A673 (cell line): ENCODE measurements at regions of chr1 and their contacts with region 1.

Region 1: DNA sequence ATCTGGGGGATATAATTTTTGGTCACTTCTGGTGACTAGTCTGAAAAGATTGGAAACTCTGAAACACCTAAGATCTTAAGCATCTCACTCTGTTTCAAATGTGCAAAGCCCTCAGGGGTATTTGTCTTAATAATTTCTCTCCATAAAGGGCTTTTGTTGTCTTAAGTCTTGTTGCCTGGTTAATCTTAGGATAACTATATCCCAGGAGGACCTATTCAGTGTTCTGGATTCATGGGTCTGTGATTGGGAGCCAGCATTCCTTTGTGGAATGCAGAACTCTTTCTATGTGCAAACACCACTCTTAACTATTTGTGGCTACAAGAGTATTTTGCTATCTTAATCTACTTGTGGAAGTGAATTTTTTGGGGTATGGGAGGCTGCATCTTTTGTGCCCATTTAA is 1573.0 kb upstream of the PRMT6 start:
- DNase-seq: no peak
- H3K4me3 ChIP-seq: no peak overlapping the region
- H3K27ac ChIP-seq: no peak overlapping the region
- H3K4me1 ChIP-seq: no peaks in the 10 kb centered on the region
- H3K27me3 ChIP-seq: no peaks in the 10 kb centered on the region
- CTCF ChIP-seq: no peak

Region 2: GRCh38 chr1:105516068-105516467 is 32.6 kb after region 1 on chr1:
- CTCF ChIA-PET with region 1: no interaction called
- POLR2A ChIA-PET with region 1: no interaction called
- intact Hi-C with region 1: loop called (anchors 5 kb)
- DNase-seq: no peak
- H3K4me3 ChIP-seq: no peak overlapping the region
- H3K27ac ChIP-seq: no peak overlapping the region
- H3K4me1 ChIP-seq: no peaks in the 10 kb centered on the region
- H3K27me3 ChIP-seq: no peaks in the 10 kb centered on the region
- CTCF ChIP-seq: no peak

Region 3: DNA sequence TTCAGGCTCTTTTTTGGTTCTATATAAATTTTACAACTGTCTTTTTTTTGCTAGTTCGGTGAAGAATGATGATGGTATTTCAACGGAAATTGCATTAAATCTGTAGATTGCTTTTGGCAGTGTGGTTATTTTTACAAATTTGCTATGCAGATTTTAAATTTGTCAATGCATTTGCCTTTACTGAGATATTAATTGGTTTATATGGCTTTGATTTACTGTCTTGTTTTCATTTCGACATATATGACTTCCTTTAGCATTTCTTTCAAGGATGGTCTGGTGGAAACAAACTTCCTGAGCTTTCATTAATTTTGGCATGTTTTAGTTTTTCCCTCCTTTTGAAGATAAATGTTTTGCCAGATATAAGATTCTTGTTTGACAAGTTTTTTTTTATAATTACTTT is 50.6 kb after region 1 on chr1:
- CTCF ChIA-PET with region 1: no interaction called
- POLR2A ChIA-PET with region 1: no interaction called
- intact Hi-C with region 1: loop called (anchors 5 kb)
- DNase-seq: peak; percentile 55
- H3K4me3 ChIP-seq: no peak overlapping the region
- H3K27ac ChIP-seq: peak overlapping the region; percentile 34
- H3K4me1 ChIP-seq: peaks cover 12% of the 10 kb centered on the region
- H3K27me3 ChIP-seq: no peaks in the 10 kb centered on the region
- CTCF ChIP-seq: no peak

Region 4: GRCh38 chr1:105591681-105592080 is 108.2 kb after region 1 on chr1:
- CTCF ChIA-PET with region 1: no interaction called
- POLR2A ChIA-PET with region 1: no interaction called
- intact Hi-C with region 1: loop called (anchors 5 kb)
- DNase-seq: no peak
- H3K4me3 ChIP-seq: no peak overlapping the region
- H3K27ac ChIP-seq: no peak overlapping the region
- H3K4me1 ChIP-seq: no peaks in the 10 kb centered on the region
- H3K27me3 ChIP-seq: no peaks in the 10 kb centered on the region
- CTCF ChIP-seq: no peak